GM10248 (cell line): ENCODE measurements at regions of chr16 and their contacts with region 1.

Region 1: DNA sequence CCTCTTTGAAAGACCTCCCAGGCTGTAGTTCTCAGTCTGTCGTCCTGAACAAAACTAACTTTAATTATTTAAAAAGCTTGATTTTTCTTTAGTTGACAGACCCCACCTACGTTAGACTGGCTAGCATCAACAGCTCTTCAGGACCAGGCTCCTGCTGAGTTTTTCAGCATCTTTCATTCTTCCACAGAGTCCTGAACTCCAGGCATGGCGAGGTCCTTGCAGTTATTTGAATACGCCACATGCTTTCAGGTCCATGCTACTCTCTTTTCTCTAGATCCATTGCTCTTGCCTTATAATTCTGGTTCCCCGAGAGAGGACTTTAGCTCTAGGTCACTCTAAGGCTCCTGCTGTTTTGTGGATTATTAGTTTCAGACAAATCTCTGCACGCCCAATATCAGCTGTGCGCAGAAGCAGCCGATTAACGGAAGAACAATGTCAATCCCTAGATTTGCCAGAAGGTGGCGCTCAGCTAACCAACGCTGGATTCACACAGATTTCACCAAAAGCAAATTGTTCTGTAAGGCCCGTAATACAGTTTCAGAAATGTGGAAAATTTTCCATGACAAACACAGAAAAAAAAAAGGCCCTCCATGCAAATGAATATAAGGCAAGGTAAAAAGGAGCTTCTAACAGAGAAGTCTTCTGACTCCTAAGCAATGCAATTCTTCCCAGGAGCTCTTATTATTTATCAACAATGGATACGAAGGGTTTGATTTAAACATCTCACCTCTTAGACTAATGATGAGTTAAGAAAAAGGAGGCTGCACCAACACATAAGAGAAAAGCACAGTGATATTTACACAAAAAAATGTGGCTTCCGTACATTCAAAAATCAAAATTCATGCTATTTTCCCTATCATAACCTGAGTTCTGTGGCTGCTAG is 33.5 kb upstream of the BCO1 start:
- DNase-seq: peak; percentile 73
- CTCF ChIP-seq: peak; percentile 43

Region 2: GRCh38 chr16:80986557-80986956 is 218.5 kb before region 1 on chr16:
- CTCF ChIA-PET with region 1: no interaction called
- POLR2A ChIA-PET with region 1: no interaction called
- DNase-seq: no peak
- CTCF ChIP-seq: no peak

Region 3: DNA sequence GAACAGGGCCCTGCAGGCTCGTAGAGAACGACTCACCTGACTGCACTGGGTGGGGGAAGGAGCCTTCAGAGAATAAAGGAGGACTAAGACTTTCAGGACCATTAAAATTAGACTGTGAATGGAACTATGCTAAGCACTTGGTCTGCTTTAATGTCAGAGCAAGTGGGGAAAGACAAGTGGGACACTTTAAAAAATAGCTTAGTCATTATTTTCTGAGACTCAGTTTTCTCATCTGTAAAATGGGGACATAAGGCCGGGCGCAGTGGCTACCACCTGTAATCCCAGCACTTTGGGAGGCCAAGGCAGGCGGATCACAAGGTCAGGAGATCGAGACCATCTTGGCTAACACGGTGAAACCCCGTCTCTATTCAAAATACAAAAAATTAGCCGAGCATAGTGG is 14.1 kb after region 1 on chr16:
- CTCF ChIA-PET with region 1: interaction called, 10 read pairs
- POLR2A ChIA-PET with region 1: no interaction called
- DNase-seq: no peak
- CTCF ChIP-seq: no peak

Region 4: DNA sequence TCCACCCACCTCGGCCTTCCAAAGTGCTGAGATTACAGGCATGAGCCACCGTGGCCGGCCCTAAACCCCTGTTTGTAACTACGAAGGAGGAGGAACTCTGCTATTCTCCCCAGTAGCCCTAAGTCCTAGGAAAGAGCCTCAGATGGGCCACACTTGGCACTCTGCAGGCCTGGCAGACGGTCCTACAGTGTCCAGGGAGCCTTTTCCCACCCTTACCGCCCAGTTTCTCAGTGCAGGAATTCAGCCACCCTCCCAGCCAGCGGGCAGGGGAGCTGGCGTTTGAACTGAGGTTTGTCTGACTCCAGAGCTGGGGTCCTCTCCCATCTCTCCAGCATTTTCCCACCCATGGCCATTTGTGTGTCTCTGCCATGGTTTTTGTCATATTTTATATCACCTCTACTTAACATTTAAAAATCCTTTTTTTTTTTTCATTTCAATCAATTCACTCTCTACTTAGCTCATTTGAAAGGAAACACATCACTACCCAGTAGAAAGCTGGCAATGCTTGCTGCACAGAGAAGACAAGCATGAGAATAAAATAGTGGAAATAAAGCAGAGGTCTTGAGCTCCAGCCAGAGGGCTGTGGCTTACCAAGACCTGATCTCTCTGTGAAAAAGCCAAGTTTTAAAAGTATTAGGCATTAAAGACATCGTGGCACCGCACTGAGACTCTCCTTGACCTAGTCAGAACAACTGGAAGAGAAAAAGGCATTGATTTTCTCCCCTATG is 68.3 kb after region 1 on chr16:
- CTCF ChIA-PET with region 1: no interaction called
- POLR2A ChIA-PET with region 1: no interaction called
- DNase-seq: no peak
- CTCF ChIP-seq: no peak